Prostate gland (tissue), 2 donors: ENCODE measurements at regions of chr11 and their contacts with region 1.

Region 1: GRCh38 chr11:115334932-115335788 is 169.1 kb downstream of the CADM1 start:
- DNase-seq: no peak
- H3K4me3 ChIP-seq: no peak overlapping the region
- H3K27ac ChIP-seq: no peak overlapping the region
- H3K4me1 ChIP-seq: no peaks in the 10 kb centered on the region
- H3K27me3 ChIP-seq: no peaks in the 10 kb centered on the region
- CTCF ChIP-seq: peak; percentile 14 to 76 (median 66)
- POLR2A ChIP-seq: no peak

Region 2: GRCh38 chr11:116276051-116277044 is 941.2 kb after region 1 on chr11:
- intact Hi-C with region 1: loop called (anchors 2 kb)
- DNase-seq: peak; percentile 40
- H3K4me3 ChIP-seq: no peak overlapping the region
- H3K27ac ChIP-seq: no peak overlapping the region
- H3K4me1 ChIP-seq: no peaks in the 10 kb centered on the region
- H3K27me3 ChIP-seq: no peaks in the 10 kb centered on the region
- CTCF ChIP-seq: peak; percentile 73 to 94 (median 86)
- POLR2A ChIP-seq: no peak